ENCODE measurements at regions of chr18 and their contacts with region 1.

Region 1: DNA sequence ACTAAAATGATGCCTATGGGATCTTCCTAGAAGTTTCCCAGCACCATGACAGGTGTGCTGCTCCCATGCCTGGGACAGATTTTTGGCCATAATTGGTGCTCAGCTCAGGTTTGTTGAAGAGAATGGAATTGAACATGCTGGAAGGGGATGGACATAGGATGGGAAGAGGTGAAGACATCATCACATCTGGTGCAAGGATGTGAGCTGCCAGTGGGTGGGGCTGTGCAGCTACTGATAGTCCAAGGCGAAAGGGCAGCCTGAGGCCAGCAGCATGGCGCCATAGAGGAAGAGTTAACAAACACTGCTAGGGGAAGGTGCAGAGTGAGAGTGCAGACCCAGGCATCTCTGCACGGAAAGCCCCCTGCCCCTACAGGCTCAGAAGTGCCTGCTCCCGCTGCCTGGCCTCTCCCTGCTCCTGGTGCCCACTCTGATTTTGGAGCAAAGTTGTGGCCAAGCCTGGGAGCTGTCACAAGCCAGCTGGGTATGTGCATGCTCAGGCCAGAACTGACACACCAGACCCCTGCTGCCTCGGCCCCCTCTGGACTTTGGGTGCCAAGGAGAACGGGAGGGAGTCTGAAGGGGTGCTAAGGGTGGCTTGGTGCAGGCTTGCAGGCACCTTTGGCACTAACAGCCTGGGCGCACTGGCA is 178.6 kb downstream of the ZBTB7C start:
- DNase-seq: peak; percentile 68 to 86 (median 84)
- ATAC-seq: peak; percentile 94
- H3K4me3 ChIP-seq: no peak overlapping the region
- H3K4me1 ChIP-seq: no peaks in the 10 kb centered on the region
- CTCF ChIP-seq: peak; percentile 27

Region 2: GRCh38 chr18:48345596-48345995 is 115.0 kb after region 1 on chr18:
- intact Hi-C with region 1: loop called in 1 of 2 experiments (anchors 1 kb)
- DNase-seq: peak in 2 of 3 donors; percentile 60 to 61
- ATAC-seq: peak; percentile 75
- H3K4me3 ChIP-seq: no peak overlapping the region
- H3K4me1 ChIP-seq: no peaks in the 10 kb centered on the region
- CTCF ChIP-seq: no peak

Region 3: GRCh38 chr18:48374423-48375149 is 144.0 kb after region 1 on chr18:
- intact Hi-C with region 1: no loop called
- DNase-seq: no peak
- ATAC-seq: no peak
- H3K4me3 ChIP-seq: no peak overlapping the region
- H3K4me1 ChIP-seq: no peaks in the 10 kb centered on the region
- CTCF ChIP-seq: no peak

Region 4: DNA sequence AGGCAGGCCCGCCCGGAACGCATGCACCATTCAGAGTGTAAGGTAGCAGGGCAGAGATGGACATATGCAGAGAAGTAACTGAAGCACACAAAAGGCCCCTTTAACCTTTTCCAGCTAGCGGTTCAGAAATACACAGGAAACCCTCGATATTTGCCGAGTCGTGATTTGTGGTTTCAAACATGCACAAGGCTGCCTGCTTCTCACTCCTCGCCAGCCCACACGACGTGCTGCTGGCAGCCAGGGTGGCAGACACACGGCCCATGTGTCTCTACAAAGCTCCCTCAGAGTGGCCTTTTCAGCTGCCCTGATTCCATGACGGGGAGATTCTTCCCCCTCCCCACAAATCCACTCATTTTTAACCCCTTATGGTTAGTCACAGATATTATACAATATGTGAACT is 155.0 kb after region 1 on chr18:
- intact Hi-C with region 1: no loop called
- DNase-seq: no peak
- ATAC-seq: no peak
- H3K4me3 ChIP-seq: no peak overlapping the region
- H3K4me1 ChIP-seq: no peaks in the 10 kb centered on the region
- CTCF ChIP-seq: no peak

Region 5: DNA sequence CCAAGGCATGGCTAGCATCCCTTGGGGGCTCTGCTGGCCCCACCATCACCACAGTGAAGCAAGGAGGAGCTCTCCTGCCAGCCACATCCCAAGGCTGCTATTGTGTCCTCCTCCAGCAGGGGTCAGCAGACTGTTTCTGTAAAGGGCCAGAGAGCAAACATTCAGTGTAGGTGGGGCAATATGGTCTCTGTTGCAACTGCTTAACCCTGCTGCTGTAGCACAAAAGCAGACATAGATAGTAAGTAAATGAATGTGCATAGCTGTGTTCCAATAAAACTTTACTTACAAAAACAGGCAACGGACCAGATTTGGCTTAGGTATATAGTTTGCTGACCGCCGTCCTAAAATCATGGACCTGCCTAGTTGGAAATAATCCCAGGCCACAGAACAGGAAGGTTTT is 214.9 kb after region 1 on chr18:
- intact Hi-C with region 1: loop called in 1 of 2 experiments (anchors 10 kb)
- DNase-seq: peak in 2 of 3 donors; percentile 84 to 90
- ATAC-seq: peak; percentile 94
- H3K4me3 ChIP-seq: no peak overlapping the region
- H3K4me1 ChIP-seq: no peaks in the 10 kb centered on the region
- CTCF ChIP-seq: peak; percentile 89